GM12878 (cell line): ENCODE measurements at regions of chr2 and their contacts with region 1.

Region 1: DNA sequence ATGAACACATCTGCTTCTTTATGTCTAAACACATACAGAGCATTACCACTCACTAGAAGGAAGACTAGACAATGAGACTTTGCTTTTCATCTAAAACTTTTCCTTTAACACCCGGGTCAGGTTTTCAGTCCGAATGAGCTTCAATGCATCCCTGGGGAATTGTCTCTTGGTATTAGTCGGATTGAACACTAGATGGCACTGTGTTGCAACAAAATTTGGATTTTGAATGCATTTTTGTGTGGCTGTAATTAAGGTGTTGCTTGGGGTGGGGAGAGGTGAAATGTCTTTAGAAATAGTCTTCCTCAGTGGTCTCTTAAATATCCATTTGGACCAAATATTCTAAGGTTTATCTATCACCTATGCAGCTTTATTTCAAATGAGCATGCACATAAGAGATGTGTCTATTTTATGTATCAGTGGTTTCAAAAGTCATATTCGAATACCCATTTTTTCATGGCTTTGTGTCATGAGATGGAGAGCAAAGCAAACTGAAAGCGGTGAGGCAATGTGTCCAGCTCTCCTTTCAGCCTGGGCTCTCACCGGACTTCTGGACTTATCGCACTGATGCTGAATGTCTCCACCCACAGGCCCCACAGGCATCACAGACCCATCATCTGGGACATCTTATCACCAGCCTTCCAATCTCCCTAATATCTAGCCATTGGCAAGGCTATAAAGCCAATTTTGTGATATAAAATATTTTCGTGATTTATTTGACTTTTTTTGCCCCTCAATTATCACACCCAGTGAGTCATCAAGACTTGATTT is 510.3 kb downstream of the RNF144A start:
- DNase-seq: peak; percentile 66
- ATAC-seq: no peak; the same call in 2 of the 3 replicates
- H3K4me3 ChIP-seq: no peak overlapping the region
- H3K27ac ChIP-seq: no peak overlapping the region
- H3K4me1 ChIP-seq: peaks cover 7% of the 10 kb centered on the region; the same call in 1 of the 2 replicates
- H3K27me3 ChIP-seq: peaks cover 0 to 25% of the 10 kb centered on the region in 2 experiments; a peak in 3 of 4 replicates
- CTCF ChIP-seq: peak; percentile 44 to 70 (median 70); a peak in 5 of 6 replicates
- EP300 ChIP-seq: no peak
- POLR2A ChIP-seq: no peak
- RAD21 ChIP-seq: peak; percentile 88

Region 2: GRCh38 chr2:7497178-7497577 is 69.7 kb after region 1 on chr2:
- CTCF ChIA-PET with region 1: interaction called, 9 read pairs
- POLR2A ChIA-PET with region 1: no interaction called
- RAD21 ChIA-PET with region 1: interaction called, 14 read pairs
- SMC1A ChIA-PET with region 1: no interaction called
- in situ Hi-C with region 1: no loop called
- intact Hi-C with region 1: no loop called
- DNase-seq: no peak
- ATAC-seq: peak; percentile 89
- H3K4me3 ChIP-seq: no peak overlapping the region
- H3K27ac ChIP-seq: no peak overlapping the region
- H3K4me1 ChIP-seq: no peaks in the 10 kb centered on the region
- H3K27me3 ChIP-seq: no peaks in the 10 kb centered on the region
- CTCF ChIP-seq: no peak
- EP300 ChIP-seq: no peak
- POLR2A ChIP-seq: no peak
- RAD21 ChIP-seq: no peak

Region 3: DNA sequence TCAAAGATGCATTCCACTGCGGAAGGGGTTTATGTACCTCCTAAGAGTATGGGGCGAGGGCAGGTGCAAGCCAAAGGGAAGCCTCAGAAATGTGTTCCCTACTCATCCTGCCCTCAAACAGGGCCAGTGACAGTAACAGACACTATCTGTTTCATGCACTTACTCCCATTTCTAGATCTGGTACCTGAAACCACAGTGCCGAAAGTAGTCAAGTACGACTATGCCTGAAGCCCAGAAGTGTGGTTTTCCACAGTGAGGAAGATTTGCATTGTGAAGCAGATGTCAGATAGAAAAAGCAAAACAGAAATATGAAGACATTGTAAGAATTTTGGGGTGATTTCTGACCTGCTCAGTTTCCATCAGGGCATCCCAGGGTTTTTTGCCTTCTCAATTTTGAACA is 238.4 kb after region 1 on chr2:
- CTCF ChIA-PET with region 1: interaction called, 53 read pairs
- POLR2A ChIA-PET with region 1: no interaction called
- RAD21 ChIA-PET with region 1: interaction called, 25 read pairs
- SMC1A ChIA-PET with region 1: interaction called, 32 read pairs
- in situ Hi-C with region 1: no loop called
- intact Hi-C with region 1: loop called (anchors 2 kb)
- DNase-seq: peak; percentile 53
- ATAC-seq: peak; percentile 93
- H3K4me3 ChIP-seq: no peak overlapping the region; the same call in 1 of the 2 replicates
- H3K27ac ChIP-seq: no peak overlapping the region
- H3K4me1 ChIP-seq: peaks cover 4% of the 10 kb centered on the region; the same call in 1 of the 2 replicates
- H3K27me3 ChIP-seq: no peaks in the 10 kb centered on the region
- CTCF ChIP-seq: no peak
- EP300 ChIP-seq: peak; percentile 41 to 68; a peak in 2 of 4 replicates
- POLR2A ChIP-seq: no peak
- RAD21 ChIP-seq: no peak

Region 4: GRCh38 chr2:7736646-7737305 is 309.3 kb after region 1 on chr2:
- CTCF ChIA-PET with region 1: interaction called, 16 read pairs
- POLR2A ChIA-PET with region 1: no interaction called
- RAD21 ChIA-PET with region 1: interaction called, 8 read pairs
- SMC1A ChIA-PET with region 1: interaction called, 29 read pairs
- in situ Hi-C with region 1: no loop called
- intact Hi-C with region 1: no loop called
- DNase-seq: no peak
- ATAC-seq: peak; percentile 33
- H3K4me3 ChIP-seq: no peak overlapping the region
- H3K27ac ChIP-seq: no peak overlapping the region
- H3K4me1 ChIP-seq: no peaks in the 10 kb centered on the region
- H3K27me3 ChIP-seq: no peaks in the 10 kb centered on the region
- CTCF ChIP-seq: no peak
- EP300 ChIP-seq: no peak
- POLR2A ChIP-seq: no peak
- RAD21 ChIP-seq: no peak

Region 5: GRCh38 chr2:8234757-8235374 is 807.4 kb after region 1 on chr2:
- CTCF ChIA-PET with region 1: no interaction called
- POLR2A ChIA-PET with region 1: no interaction called
- RAD21 ChIA-PET with region 1: interaction called, 4 read pairs
- SMC1A ChIA-PET with region 1: interaction called, 3 read pairs
- in situ Hi-C with region 1: no loop called
- intact Hi-C with region 1: loop called (anchors 10 kb)
- DNase-seq: peak; percentile 90
- ATAC-seq: peak; percentile 88
- H3K4me3 ChIP-seq: peak overlapping the region; percentile 26; the same call in 1 of the 2 replicates
- H3K27ac ChIP-seq: peak overlapping the region; percentile 41
- H3K4me1 ChIP-seq: peaks cover 39% of the 10 kb centered on the region
- H3K27me3 ChIP-seq: no peaks in the 10 kb centered on the region
- CTCF ChIP-seq: no peak
- EP300 ChIP-seq: peak; percentile 78 to 84
- POLR2A ChIP-seq: no peak
- RAD21 ChIP-seq: no peak

Region 6: DNA sequence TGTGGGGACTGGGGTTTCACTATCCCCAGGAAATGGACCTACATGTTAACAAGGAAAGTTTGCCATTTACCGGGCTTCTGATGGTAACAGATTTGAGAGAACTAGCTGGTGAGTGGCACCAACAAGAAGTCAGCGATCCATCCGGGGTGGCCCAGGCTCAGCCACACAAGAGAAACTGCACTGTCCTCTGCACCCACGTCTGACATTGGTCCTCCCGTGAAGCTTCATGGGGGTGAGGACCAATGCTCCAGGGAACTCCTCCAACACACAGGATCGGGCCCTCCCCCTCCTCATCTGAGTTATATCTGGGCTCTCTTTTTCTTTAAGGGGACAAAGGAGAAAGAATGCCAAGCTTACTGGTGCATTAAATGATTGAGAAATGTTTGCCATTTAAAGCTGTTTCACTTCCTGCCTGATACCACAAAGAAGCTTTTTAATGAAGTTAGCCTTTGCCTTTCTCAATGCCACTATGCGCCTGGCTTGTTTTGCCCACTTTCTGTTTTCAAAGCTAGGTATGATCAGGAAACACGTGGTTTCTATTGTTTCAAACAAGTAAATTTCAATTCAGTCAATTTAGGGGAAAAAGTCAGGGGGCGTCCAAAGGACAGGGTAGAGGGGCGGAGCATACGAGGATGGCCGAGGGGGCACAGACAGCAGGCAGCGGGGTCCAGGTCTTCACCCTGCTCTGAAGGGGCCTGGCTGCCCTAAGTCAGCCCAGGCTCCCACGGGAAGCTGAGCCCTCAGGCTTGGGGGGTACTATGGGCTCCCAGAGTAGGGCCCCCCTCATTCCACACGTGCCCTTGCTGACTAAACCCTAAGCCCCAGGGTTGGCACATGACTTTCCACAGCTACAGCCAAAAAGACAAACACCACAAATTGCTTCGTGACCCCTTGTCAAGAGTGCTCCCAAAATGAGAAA is 1050.3 kb after region 1 on chr2:
- CTCF ChIA-PET with region 1: interaction called, 4 read pairs
- POLR2A ChIA-PET with region 1: no interaction called
- RAD21 ChIA-PET with region 1: interaction called, 11 read pairs
- SMC1A ChIA-PET with region 1: interaction called, 8 read pairs
- in situ Hi-C with region 1: no loop called
- intact Hi-C with region 1: loop called (anchors 5 kb)
- DNase-seq: peak; percentile 95
- ATAC-seq: peak; percentile 52
- H3K4me3 ChIP-seq: peak overlapping the region; percentile 43; the same call in 1 of the 2 replicates
- H3K27ac ChIP-seq: peak overlapping the region; percentile 62
- H3K4me1 ChIP-seq: peaks cover 68% of the 10 kb centered on the region
- H3K27me3 ChIP-seq: no peaks in the 10 kb centered on the region
- CTCF ChIP-seq: no peak
- EP300 ChIP-seq: peak; percentile 94 to 96
- POLR2A ChIP-seq: no peak
- RAD21 ChIP-seq: no peak

Region 7: DNA sequence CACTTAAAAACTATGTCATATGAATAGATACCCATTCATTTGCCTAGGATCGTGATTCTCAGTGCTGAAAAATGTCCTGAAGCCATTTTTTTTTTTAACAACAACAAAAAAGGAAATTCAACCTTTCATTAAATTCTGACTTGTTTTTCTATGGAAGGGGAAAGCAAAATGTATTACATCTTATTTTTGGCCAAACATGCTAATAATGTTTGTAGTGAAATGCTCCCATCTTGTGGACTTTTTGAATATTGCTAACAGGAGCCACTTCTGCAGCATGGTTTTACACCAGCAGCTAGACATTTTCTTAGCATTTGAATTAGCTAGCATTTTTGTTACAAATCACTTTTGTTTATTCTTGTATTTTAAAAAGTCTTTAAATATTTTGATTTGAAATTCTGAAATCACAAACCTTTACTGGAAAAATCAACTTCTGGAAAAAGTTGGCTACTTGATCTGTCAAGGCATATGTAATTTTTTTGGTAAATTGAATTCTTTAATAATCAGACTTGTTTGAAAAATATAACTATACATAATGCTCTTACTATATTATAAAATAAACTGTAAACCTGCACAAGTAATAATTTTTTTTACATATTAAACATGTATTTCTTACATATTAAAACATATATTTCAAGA is 1334.2 kb after region 1 on chr2:
- CTCF ChIA-PET with region 1: interaction called, 20 read pairs
- POLR2A ChIA-PET with region 1: no interaction called
- RAD21 ChIA-PET with region 1: interaction called, 3 read pairs
- SMC1A ChIA-PET with region 1: interaction called, 5 read pairs
- in situ Hi-C with region 1: no loop called
- intact Hi-C with region 1: loop called (anchors 5 kb)
- DNase-seq: peak; percentile 35
- ATAC-seq: peak; percentile 65
- H3K4me3 ChIP-seq: no peak overlapping the region
- H3K27ac ChIP-seq: no peak overlapping the region
- H3K4me1 ChIP-seq: no peaks in the 10 kb centered on the region
- H3K27me3 ChIP-seq: no peaks in the 10 kb centered on the region
- CTCF ChIP-seq: peak; percentile 49 to 65 (median 56)
- EP300 ChIP-seq: no peak
- POLR2A ChIP-seq: no peak
- RAD21 ChIP-seq: peak; percentile 67

Region 8: DNA sequence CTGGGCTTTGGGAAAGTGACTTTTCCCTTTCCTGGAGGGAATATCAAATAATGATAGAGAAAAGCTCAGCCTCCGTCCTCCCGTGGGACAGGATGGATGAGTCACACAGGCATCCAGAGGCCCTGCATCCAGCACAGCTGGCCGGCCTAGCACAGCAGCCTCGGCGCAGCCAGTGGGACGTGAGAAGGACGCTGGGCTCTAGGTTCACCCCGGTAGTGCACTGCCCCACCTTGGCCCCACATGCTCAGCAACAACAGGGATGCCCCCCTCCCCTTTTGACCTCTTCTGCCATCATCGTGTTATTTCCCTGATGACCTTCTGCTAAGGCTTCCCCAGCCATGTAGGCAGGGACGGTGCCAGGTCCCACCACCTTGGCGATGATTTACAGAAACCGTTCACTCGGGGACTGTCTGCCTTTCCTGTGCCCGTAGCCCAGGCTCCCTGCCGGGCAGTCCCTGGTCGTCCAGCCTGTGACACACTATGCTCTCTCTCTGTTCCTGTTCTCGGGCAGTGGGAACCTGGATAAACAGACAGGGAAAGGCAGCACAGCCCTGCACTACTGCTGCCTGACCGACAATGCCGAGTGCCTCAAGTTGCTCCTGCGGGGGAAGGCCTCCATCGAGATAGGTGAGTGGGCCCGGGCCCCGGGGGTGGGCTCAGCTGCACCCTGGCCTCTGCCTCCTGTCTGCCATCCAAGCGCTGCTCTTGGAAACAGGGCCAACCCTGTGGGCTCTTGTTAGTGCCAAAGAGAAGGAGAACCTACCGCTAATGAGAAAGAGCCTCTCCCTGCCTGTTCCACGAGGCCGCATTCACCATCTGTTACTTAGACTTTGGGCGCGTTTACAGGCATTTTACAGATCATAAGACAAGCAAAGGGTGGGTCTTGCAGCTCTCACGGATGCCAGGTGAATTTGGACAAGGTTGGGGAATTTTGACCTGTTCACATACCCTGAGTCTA is 1951.2 kb after region 1 on chr2:
- CTCF ChIA-PET with region 1: no interaction called
- POLR2A ChIA-PET with region 1: no interaction called
- RAD21 ChIA-PET with region 1: no interaction called
- SMC1A ChIA-PET with region 1: no interaction called
- in situ Hi-C with region 1: no loop called
- intact Hi-C with region 1: no loop called
- DNase-seq: no peak
- ATAC-seq: no peak
- H3K4me3 ChIP-seq: no peak overlapping the region
- H3K27ac ChIP-seq: no peak overlapping the region
- H3K4me1 ChIP-seq: no peaks in the 10 kb centered on the region
- H3K27me3 ChIP-seq: peaks cover 0 to 2% of the 10 kb centered on the region in 2 experiments; a peak in 2 of 4 replicates
- CTCF ChIP-seq: no peak
- EP300 ChIP-seq: no peak
- POLR2A ChIP-seq: no peak
- RAD21 ChIP-seq: no peak